Right ventricle myocardium inferior (tissue), 1 donor: ENCODE measurements at regions of chr1 and their contacts with region 1.

Region 1: DNA sequence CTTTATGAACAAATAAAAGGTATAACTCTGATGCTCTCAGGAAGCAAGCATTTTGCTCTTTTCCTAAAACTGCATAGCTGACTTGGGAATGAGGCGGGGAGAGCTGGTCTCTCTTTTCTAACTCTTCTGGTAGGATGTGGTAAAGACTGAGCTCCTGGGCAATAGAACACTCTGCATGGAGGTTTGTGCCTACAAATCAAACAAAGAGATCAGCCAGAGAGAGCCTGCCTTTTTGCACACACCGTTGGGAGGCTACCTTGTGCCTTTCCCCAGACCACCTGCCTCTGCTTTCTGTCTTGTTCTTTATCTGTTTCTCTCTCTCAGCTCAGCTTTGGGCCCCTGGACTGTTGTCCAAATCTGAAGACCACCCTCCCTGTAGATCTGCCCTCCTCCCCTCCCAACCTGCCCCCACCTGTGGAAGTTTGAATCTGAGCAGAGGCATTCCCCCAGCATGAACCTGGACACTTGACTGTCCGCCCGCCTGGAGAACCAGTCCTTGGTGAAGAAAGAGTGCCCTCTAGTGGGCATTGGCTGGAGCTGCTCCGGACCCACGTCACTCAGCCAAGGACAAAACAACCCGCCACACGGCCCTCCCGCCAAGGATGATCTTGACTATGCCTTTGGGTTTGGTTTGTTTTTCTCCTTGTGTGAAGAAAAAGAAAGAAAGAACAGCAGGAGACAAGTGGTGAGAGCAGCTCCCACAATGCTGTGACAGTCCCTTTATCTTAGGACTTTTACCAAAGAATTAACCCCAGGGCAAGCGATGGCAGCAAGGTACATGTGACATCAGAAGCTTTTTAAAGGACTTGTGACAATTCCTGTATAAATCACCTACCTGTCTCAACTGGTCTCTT is 228.2 kb downstream of the PBX1 start:
- DNase-seq: peak; percentile 81
- ATAC-seq: peak; percentile 82

Region 2: GRCh38 chr1:164163289-164163864 is 623.8 kb before region 1 on chr1:
- intact Hi-C with region 1: loop called (anchors 5 kb)
- DNase-seq: no peak
- ATAC-seq: no peak

Region 3: GRCh38 chr1:164440232-164440631 is 347.0 kb before region 1 on chr1:
- intact Hi-C with region 1: loop called (anchors 2 kb)
- DNase-seq: no peak
- ATAC-seq: peak; percentile 91

Region 4: DNA sequence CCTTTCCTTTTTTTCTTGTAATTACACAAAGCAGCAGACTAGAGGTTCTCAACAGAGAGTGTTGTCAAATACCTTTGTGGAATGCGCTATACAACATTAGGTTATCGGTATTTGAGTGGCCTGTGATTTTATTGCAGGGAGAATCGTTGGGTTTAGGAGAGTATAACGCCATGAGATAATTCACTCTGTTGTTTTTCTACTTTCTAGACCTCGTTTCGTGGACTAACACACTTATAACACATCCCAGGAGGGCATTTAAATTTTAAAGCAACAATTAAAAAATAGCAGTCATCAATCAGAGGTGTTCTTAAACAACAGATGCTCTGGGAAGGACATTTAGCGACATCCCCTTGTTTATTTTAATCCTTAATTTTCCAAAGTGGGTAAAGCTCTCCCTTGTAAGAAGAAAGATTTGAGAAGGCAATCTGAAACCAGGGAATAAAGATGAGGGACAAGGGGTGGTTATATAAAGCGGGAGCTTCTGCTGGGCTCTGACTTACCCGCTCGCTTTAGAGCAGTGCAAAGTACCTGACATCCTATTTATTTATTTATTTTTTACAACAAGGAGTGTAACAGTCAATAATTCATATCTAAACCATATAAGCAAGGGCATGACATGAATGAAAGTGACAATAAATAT is 223.4 kb before region 1 on chr1:
- intact Hi-C with region 1: loop called (anchors 2 kb)
- DNase-seq: no peak
- ATAC-seq: no peak

Region 5: GRCh38 chr1:164876398-164877116 is 89.3 kb after region 1 on chr1:
- intact Hi-C with region 1: no loop called
- DNase-seq: no peak
- ATAC-seq: no peak

Region 6: GRCh38 chr1:164914208-164914607 is 127.0 kb after region 1 on chr1:
- intact Hi-C with region 1: loop called (anchors 2 kb)
- DNase-seq: no peak
- ATAC-seq: peak; percentile 66